HEK293 (cell line): ENCODE measurements at regions of chr18 and their contacts with region 1.

Region 1: GRCh38 chr18:49510393-49511115 is 23.5 kb upstream of the C18orf32 start:
- H3K4me3 ChIP-seq: no peak overlapping the region
- H3K27ac ChIP-seq: no peak overlapping the region
- H3K4me1 ChIP-seq: no peaks in the 10 kb centered on the region
- CTCF ChIP-seq: peak; percentile 86

Region 2: DNA sequence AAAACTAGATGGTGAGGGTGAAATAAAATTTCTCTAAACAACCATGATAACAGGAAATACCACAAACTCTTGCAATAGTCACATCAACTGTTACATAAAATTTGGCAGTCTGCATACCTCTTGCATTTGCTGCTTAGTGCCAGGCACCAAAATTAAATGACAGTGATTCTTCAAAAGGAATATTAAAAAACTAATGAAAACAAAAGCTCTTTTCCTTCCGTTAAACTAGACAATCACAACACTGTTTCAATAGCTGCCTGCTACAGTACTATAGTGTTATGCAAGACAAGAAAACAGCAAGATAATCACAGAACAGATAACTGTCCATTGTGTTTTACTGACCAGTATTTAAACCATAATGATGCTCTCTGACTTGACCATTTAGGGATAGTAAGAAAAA is 320.8 kb before region 1 on chr18:
- CTCF ChIA-PET with region 1: no interaction called
- POLR2A ChIA-PET with region 1: no interaction called
- H3K4me3 ChIP-seq: no peak overlapping the region
- H3K27ac ChIP-seq: no peak overlapping the region
- H3K4me1 ChIP-seq: no peaks in the 10 kb centered on the region
- CTCF ChIP-seq: no peak

Region 3: DNA sequence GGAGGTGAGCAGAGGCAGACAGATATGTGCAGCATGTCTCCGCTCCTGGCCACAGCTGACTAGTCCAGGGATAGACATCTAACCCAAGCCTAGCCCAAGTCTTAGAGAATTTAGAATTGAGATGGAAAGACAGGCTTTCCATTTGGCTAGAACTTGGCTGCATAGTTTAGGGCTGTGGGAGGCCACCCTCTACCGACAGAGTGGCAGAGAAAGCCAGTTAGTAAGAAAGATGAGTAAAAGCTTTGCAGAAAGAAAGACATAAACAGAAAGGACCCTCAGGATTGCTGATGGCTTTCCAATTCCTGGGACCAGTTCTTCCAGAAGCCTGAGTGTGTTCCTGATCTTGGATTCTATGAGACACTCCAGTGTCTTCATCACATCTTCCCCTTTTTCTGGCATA is 112.2 kb before region 1 on chr18:
- CTCF ChIA-PET with region 1: no interaction called
- POLR2A ChIA-PET with region 1: no interaction called
- H3K4me3 ChIP-seq: no peak overlapping the region
- H3K27ac ChIP-seq: no peak overlapping the region
- H3K4me1 ChIP-seq: 0 out of 2 replicates have a peak, but pooled peaks cover 4% of the 10 kb centered on the region
- CTCF ChIP-seq: no peak

Region 4: GRCh38 chr18:49412679-49413078 is 97.9 kb before region 1 on chr18:
- CTCF ChIA-PET with region 1: interaction called, 10 read pairs
- POLR2A ChIA-PET with region 1: no interaction called
- H3K4me3 ChIP-seq: no peak overlapping the region
- H3K27ac ChIP-seq: no peak overlapping the region
- H3K4me1 ChIP-seq: peaks cover 7% of the 10 kb centered on the region; the same call in 1 of the 2 replicates
- CTCF ChIP-seq: no peak

Region 5: DNA sequence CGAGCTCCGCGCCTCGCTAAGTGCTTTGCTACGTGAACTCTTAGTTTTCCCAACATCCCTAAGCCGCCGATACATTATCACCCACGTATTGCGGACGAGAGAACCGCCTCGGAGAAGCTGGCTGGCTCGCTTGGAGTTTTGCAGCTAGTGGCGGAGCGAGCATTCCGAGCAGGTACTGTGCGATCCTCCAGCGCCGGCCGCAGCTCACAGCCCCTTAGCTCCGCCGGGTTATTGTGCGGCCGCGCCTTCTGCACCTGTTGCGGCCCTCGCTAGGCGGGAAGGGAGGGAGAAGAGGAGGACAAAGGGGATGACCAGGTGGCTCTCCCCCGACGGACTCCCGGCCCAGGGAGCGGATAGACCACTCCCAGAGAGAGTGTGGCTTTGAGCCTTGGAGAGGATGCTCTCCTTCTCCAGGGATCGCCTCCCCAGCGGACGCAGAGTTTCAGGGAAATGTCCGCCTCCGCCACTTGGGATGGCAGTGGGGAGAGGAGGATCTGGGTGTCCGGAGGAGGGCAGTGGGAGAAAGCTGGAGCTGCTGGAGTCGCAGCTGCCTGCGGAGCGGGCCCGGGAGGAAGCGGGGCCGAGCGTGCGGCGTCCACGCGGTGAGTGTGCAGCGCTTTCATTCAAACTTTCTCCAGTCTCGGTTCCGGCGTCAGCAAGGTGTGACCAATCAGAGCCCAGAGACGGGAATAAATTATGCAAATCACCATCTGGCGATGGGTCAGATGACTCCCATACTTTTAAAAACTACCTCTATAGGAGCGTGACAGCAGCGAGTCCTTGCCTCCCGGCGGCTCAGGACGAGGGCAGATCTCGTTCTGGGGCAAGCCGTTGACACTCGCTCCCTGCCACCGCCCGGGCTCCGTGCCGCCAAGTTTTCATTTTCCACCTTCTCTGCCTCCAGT is 51.0 kb after region 1 on chr18 and contains the start of gene LIPG:
- CTCF ChIA-PET with region 1: interaction called, 19 read pairs
- POLR2A ChIA-PET with region 1: no interaction called
- H3K4me3 ChIP-seq: peak within 1 kb of the TSS; percentile 23
- H3K27ac ChIP-seq: peak within 1 kb of the TSS; percentile 64; the same call in 1 of the 2 replicates
- H3K4me1 ChIP-seq: peaks cover 9% of the 10 kb centered on the region; the same call in 1 of the 2 replicates
- CTCF ChIP-seq: peak; percentile 50

Region 6: DNA sequence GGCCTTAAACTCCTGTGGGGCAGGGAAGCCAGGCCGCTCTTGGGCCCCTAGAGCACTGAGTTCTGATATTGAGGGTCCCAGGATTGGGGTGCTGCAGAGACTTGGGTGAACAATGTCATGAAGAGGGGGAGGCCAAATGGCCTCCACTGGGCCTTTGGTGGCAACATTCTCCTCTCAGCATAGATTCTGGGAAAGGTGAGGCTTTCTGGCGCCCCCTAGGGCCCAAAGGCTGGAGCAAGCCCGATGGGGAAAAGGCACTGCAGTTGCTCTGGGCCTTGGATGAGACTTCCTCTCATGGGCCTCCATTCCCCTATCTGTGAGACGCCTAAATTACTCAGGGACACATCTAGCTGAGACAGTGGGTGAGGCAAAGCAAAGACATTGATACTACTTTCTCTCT is 218.0 kb after region 1 on chr18:
- CTCF ChIA-PET with region 1: interaction called, 17 read pairs
- POLR2A ChIA-PET with region 1: no interaction called
- H3K4me3 ChIP-seq: no peak overlapping the region
- H3K27ac ChIP-seq: no peak overlapping the region
- H3K4me1 ChIP-seq: peaks cover 19% of the 10 kb centered on the region
- CTCF ChIP-seq: peak; percentile 46; the same call in 1 of the 2 replicates

Region 7: GRCh38 chr18:49768051-49768391 is 257.5 kb after region 1 on chr18:
- CTCF ChIA-PET with region 1: interaction called, 41 read pairs
- POLR2A ChIA-PET with region 1: no interaction called
- H3K4me3 ChIP-seq: no peak overlapping the region
- H3K27ac ChIP-seq: no peak overlapping the region
- H3K4me1 ChIP-seq: no peaks in the 10 kb centered on the region
- CTCF ChIP-seq: peak; percentile 58

Region 8: DNA sequence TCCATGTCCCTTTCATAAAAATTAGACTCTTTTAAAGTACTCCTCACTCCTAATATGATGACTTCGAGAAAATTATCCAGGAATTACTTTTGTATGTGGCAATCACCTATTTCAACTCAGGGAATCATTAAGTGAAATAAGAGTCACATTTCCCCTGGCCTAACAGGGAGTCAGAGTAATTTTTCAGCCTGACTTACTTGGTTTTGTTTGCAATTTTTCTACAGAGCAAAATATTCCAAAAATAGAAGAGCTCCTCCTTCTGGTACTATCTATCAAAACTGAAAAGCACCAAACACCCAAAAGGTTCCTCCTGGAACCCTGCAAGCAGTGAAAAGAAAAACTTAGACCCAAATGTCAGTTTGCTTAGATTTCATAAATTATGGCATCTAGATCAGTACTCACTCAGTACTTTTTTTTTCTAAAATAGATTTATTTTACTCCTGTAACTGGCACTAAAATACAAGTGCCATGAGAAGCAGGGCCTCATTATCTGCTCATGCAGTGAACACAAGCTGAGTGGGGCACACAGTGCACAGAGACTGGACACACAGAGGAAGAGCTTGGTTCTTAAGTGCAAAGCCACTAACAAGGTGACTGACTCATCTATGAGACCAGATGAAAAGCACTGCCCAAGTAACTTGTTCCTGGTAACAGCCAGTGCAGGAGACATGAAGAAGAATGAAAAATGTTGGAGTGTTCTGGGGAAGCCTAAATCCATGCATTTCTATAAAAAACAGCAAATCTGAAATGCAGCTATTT is 274.1 kb after region 1 on chr18:
- CTCF ChIA-PET with region 1: interaction called, 14 read pairs
- POLR2A ChIA-PET with region 1: no interaction called
- H3K4me3 ChIP-seq: no peak overlapping the region
- H3K27ac ChIP-seq: no peak overlapping the region
- H3K4me1 ChIP-seq: no peaks in the 10 kb centered on the region
- CTCF ChIP-seq: no peak

Region 9: DNA sequence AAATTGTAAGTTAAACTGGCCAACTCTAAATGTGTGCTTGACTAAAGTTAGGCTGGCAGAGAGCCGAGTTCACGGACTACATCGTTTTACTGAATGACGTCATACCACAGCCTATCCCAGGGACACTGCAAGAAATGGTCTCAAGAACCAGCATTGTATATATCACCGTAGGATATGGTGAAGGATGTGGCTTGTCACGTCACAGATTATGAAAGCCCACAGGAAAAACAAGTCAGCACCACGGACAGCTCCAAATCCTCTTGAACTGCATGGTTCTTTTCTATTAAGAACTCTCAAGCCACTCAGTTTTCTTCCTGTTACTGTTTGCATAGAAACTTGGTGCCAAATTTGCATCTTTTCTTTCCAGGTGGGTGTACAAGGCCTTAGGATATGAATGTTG is 387.9 kb after region 1 on chr18:
- CTCF ChIA-PET with region 1: no interaction called
- POLR2A ChIA-PET with region 1: no interaction called
- H3K4me3 ChIP-seq: no peak overlapping the region
- H3K27ac ChIP-seq: no peak overlapping the region
- H3K4me1 ChIP-seq: no peaks in the 10 kb centered on the region
- CTCF ChIP-seq: no peak

Region 10: DNA sequence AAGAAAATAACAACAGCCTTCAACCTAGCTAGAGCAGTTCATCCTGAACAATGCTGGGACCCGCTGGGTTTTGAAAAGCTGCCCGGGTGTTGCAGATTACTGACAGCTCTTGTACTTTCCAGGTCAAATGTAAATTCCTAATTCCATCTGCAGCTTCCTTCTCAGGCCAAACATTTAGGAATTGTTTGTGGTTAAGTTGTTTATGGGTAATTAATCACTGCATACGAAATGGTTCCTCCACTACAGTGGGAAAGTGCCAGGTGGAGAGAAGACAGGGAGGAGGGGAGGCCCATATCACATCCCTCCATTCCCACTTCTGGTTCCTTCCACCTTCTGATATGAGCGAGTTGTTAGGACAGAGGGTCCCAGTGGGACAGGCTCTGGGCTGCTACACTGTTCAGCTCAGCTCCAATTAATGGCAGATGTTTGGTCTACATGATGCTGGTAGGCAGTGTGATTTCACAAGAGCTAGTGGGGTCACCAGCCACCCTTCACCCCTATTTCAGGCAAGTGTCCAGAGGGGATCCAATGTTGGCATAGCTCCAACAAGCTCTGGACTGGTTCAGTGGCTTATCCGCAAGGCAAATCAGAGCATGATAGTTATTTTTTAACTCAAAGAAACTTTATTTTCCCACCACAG is 415.7 kb after region 1 on chr18:
- CTCF ChIA-PET with region 1: no interaction called
- POLR2A ChIA-PET with region 1: no interaction called
- H3K4me3 ChIP-seq: no peak overlapping the region
- H3K27ac ChIP-seq: no peak overlapping the region
- H3K4me1 ChIP-seq: no peaks in the 10 kb centered on the region
- CTCF ChIP-seq: no peak